SK-N-SH (cell line): ENCODE measurements at regions of chr6 and their contacts with region 1.

Region 1: GRCh38 chr6:26596579-26597388 is at the start of gene ABT1:
- DNase-seq: peak; percentile 96
- H3K4me3 ChIP-seq: peak within 1 kb of the TSS; percentile 72 to 94
- H3K27ac ChIP-seq: peak within 1 kb of the TSS; percentile 89 to 90
- H3K4me1 ChIP-seq: peaks cover 5 to 15% of the 10 kb centered on the region in 2 experiments; a peak in 3 of 4 replicates
- H3K27me3 ChIP-seq: no peaks in the 10 kb centered on the region
- CTCF ChIP-seq: no peak
- EP300 ChIP-seq: no peak; a peak in 1 of 4 replicates
- RAD21 ChIP-seq: no peak
- polyA plus RNA-seq, gene ABT1: 15.4 and 18.4 TPM in 2 replicates

Region 2: GRCh38 chr6:26322645-26323482 is 273.9 kb before region 1 on chr6:
- CTCF ChIA-PET with region 1: interaction called, 25 read pairs
- POLR2A ChIA-PET with region 1: no interaction called
- DNase-seq: peak; percentile 48
- H3K4me3 ChIP-seq: peak overlapping the region; percentile 68 to 72
- H3K27ac ChIP-seq: peak overlapping the region; percentile 36 to 61; a peak in 3 of 4 replicates
- H3K4me1 ChIP-seq: peaks cover 0 to 3% of the 10 kb centered on the region in 2 experiments; a peak in 1 of 4 replicates
- H3K27me3 ChIP-seq: no peaks in the 10 kb centered on the region
- CTCF ChIP-seq: no peak
- EP300 ChIP-seq: no peak; a peak in 1 of 4 replicates
- RAD21 ChIP-seq: no peak

Region 3: DNA sequence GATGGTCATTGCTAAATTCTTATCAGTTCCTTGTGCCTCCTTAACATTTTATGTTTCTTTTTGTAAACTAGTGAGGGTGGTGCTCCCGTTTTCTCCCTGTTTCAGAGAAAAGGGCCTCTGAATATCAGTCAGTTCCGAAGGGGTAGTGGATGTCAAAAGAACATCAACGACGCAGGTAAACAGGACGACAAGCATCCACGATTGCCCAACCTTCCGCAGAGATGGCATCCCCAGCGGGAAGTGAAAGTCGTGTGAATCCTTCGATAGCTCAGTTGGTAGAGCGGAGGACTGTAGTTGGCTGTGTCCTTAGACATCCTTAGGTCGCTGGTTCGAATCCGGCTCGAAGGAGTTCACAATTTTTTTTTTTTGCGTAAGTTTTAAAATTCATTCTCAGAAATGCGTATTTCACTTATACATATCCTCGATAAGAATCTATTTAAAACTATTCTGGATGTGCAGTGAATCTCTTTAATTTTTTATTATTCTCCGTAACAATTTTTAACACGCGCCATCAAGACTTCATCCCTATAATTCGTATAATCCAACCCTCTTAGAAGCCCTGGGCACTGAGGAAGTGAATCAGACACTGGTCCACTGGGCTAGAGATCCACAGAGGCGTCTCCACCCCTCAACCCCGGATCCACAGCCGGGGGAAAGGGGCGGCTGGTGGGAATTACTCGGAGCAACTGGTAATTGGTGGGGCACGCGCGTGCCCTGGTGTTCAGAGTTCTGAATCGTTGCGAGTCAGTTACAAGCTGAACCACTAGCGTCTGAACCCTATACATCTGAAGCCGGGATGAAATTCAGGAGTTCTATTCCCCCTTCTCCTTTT is 28.0 kb before region 1 on chr6:
- CTCF ChIA-PET with region 1: interaction called, 183 read pairs
- POLR2A ChIA-PET with region 1: interaction called, 8 read pairs
- DNase-seq: peak; percentile 75
- H3K4me3 ChIP-seq: peak overlapping the region; percentile 66 to 83
- H3K27ac ChIP-seq: peak overlapping the region in 1 of 2 experiments; percentile 34; a peak in 3 of 4 replicates
- H3K4me1 ChIP-seq: no peaks in the 10 kb centered on the region; a peak in 1 of 4 replicates
- H3K27me3 ChIP-seq: no peaks in the 10 kb centered on the region
- CTCF ChIP-seq: peak; percentile 41
- EP300 ChIP-seq: no peak
- RAD21 ChIP-seq: peak; percentile 57

Region 4: DNA sequence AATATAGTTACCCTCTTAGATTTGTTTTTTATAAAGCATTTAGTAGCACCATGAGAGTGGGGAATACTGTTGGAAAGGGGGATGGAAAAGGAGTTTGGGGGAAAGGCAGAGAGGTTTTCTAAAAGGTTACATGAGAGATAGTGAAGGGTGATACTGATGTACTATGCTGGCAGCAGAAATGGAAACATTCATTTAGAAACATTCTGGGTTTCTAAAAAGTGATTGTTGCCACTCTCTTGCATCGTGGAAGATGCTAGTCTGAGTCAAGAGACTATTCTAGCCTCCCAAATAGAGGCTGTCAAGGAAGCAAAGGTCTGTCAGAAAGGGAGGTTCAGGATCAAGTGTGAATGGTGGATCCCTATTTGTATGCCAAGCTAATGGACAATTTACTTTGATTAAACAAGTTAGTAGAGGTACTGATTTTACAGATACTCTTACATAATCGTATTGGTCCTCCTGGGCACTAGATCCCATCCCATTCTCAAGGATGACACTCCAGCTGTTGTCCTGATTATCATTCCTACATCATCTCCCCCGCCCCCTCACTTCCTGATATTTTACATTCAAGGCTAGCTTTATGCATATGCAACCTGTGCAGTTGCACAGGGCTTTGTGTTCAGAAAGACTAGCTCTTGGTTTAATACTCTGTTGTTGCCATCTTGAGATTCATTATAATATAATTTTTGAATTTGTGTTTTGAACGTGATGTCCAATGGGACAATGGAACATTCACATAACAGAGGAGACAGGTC is 15.4 kb before region 1 on chr6:
- CTCF ChIA-PET with region 1: interaction called, 183 read pairs
- POLR2A ChIA-PET with region 1: interaction called, 5 read pairs
- DNase-seq: no peak
- H3K4me3 ChIP-seq: no peak overlapping the region
- H3K27ac ChIP-seq: no peak overlapping the region
- H3K4me1 ChIP-seq: no peaks in the 10 kb centered on the region
- H3K27me3 ChIP-seq: peaks cover 25% of the 10 kb centered on the region
- CTCF ChIP-seq: no peak
- EP300 ChIP-seq: no peak
- RAD21 ChIP-seq: no peak

Region 5: GRCh38 chr6:27126815-27127537 is 530.2 kb after region 1 on chr6:
- CTCF ChIA-PET with region 1: interaction called, 10 read pairs
- POLR2A ChIA-PET with region 1: no interaction called
- DNase-seq: peak; percentile 70
- H3K4me3 ChIP-seq: peak overlapping the region; percentile 48 to 57
- H3K27ac ChIP-seq: peak overlapping the region; percentile 65 to 82
- H3K4me1 ChIP-seq: peaks cover 5 to 10% of the 10 kb centered on the region in 2 experiments; a peak in 3 of 4 replicates
- H3K27me3 ChIP-seq: no peaks in the 10 kb centered on the region
- CTCF ChIP-seq: peak; percentile 89
- EP300 ChIP-seq: no peak
- RAD21 ChIP-seq: peak; percentile 78